Heart left ventricle (tissue), 16 donors: ENCODE measurements at regions of chr15 and their contacts with region 1.

Region 1: GRCh38 chr15:39358441-39359041 is 222.3 kb upstream of the THBS1 start:
- DNase-seq: peak in 4 of 5 donors; percentile 31 to 49 (median 44)
- ATAC-seq: peak; percentile 80 to 94 (median 90)
- H3K4me3 ChIP-seq: no peak overlapping the region
- H3K27ac ChIP-seq: peak overlapping the region; percentile 22 to 90 (median 74)
- H3K4me1 ChIP-seq: peaks cover 0 to 36% (median 14%) of the 10 kb centered on the region in 12 donors
- H3K27me3 ChIP-seq: no peaks in the 10 kb centered on the region
- CTCF ChIP-seq: no peak
- POLR2A ChIP-seq: no peak

Region 2: GRCh38 chr15:39404767-39405181 is 46.2 kb after region 1 on chr15:
- intact Hi-C with region 1: no loop called
- DNase-seq: peak in 1 of 5 donors; percentile 39
- ATAC-seq: peak; percentile 57 to 91 (median 84)
- H3K4me3 ChIP-seq: no peak overlapping the region
- H3K27ac ChIP-seq: peak overlapping the region in 2 of 12 donors; percentile 9 to 50
- H3K4me1 ChIP-seq: peaks cover 0 to 22% (median 8%) of the 10 kb centered on the region in 12 donors
- H3K27me3 ChIP-seq: no peaks in the 10 kb centered on the region
- CTCF ChIP-seq: no peak
- POLR2A ChIP-seq: no peak

Region 3: GRCh38 chr15:39419651-39420050 is 61.1 kb after region 1 on chr15:
- intact Hi-C with region 1: no loop called
- DNase-seq: no peak
- ATAC-seq: no peak
- H3K4me3 ChIP-seq: no peak overlapping the region
- H3K27ac ChIP-seq: no peak overlapping the region
- H3K4me1 ChIP-seq: peaks cover 0 to 8% (median 0%) of the 10 kb centered on the region in 12 donors
- H3K27me3 ChIP-seq: no peaks in the 10 kb centered on the region
- CTCF ChIP-seq: no peak
- POLR2A ChIP-seq: no peak

Region 4: GRCh38 chr15:39429898-39430357 is 71.4 kb after region 1 on chr15:
- intact Hi-C with region 1: loop called in 3 of 10 experiments (anchors 2 to 10 kb)
- DNase-seq: no peak
- ATAC-seq: no peak
- H3K4me3 ChIP-seq: no peak overlapping the region
- H3K27ac ChIP-seq: peak overlapping the region in 7 of 12 donors; percentile 27 to 70 (median 34)
- H3K4me1 ChIP-seq: peaks cover 0 to 83% (median 37%) of the 10 kb centered on the region in 12 donors
- H3K27me3 ChIP-seq: no peaks in the 10 kb centered on the region
- CTCF ChIP-seq: no peak
- POLR2A ChIP-seq: no peak

Region 5: GRCh38 chr15:39438799-39439592 is 80.5 kb after region 1 on chr15:
- intact Hi-C with region 1: loop called in 2 of 10 experiments (anchors 5 to 10 kb)
- DNase-seq: peak in 1 of 5 donors; percentile 40
- ATAC-seq: peak in 3 of 4 donors; percentile 34 to 43 (median 35)
- H3K4me3 ChIP-seq: no peak overlapping the region
- H3K27ac ChIP-seq: peak overlapping the region in 11 of 12 donors; percentile 31 to 83 (median 62)
- H3K4me1 ChIP-seq: peaks cover 2 to 41% (median 25%) of the 10 kb centered on the region in 12 donors
- H3K27me3 ChIP-seq: no peaks in the 10 kb centered on the region
- CTCF ChIP-seq: no peak
- POLR2A ChIP-seq: no peak

Region 6: DNA sequence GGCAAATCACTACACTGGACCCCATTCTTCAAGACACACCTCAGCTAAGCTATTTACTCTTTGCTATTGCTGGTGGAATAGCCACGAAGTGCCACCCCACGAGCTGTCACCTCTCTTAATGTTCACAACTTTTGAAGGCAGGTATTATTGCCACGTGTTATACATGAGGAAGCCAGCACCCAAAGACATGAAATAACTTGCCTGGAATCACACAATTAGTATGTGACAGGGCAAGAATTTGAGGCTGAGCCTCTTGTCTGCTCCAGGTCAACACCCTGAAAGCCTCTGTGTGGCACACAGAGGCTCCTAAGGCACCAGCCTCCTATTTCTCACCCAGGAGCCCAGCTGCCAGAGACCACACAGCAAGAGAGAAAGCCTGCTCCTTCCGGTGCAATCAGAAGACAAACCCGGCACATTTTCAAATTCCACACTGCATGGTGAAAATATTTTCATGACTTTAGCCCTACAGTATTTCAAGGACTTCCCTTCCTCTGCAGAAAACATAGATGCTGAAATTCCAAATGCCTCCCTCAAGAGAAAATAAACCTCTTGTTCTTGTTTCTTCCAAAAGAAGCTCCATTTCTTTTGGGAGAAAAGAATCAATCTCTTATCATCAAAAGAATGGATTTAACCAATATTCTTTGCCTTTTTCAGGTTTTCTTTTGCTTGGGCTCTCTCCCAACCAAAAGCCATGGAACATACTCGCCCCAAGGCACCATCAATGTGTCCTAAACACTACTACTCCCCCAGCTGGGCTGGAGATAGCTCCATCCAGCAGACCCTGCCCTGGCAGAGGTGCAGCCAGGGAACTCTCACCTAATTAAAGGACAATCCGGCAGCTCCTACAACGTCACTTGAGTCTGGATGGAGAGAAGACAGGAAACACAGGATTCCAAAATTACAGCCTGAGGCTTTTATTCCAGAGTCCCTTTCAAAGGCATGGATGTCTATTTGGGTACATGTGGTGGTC is 137.6 kb after region 1 on chr15:
- intact Hi-C with region 1: loop called in 1 of 10 experiments (anchors 10 kb)
- DNase-seq: no peak
- ATAC-seq: no peak
- H3K4me3 ChIP-seq: no peak overlapping the region
- H3K27ac ChIP-seq: peak overlapping the region in 4 of 12 donors; percentile 10 to 45 (median 36)
- H3K4me1 ChIP-seq: peaks cover 0 to 57% (median 23%) of the 10 kb centered on the region in 12 donors
- H3K27me3 ChIP-seq: no peaks in the 10 kb centered on the region
- CTCF ChIP-seq: no peak
- POLR2A ChIP-seq: no peak

Region 7: DNA sequence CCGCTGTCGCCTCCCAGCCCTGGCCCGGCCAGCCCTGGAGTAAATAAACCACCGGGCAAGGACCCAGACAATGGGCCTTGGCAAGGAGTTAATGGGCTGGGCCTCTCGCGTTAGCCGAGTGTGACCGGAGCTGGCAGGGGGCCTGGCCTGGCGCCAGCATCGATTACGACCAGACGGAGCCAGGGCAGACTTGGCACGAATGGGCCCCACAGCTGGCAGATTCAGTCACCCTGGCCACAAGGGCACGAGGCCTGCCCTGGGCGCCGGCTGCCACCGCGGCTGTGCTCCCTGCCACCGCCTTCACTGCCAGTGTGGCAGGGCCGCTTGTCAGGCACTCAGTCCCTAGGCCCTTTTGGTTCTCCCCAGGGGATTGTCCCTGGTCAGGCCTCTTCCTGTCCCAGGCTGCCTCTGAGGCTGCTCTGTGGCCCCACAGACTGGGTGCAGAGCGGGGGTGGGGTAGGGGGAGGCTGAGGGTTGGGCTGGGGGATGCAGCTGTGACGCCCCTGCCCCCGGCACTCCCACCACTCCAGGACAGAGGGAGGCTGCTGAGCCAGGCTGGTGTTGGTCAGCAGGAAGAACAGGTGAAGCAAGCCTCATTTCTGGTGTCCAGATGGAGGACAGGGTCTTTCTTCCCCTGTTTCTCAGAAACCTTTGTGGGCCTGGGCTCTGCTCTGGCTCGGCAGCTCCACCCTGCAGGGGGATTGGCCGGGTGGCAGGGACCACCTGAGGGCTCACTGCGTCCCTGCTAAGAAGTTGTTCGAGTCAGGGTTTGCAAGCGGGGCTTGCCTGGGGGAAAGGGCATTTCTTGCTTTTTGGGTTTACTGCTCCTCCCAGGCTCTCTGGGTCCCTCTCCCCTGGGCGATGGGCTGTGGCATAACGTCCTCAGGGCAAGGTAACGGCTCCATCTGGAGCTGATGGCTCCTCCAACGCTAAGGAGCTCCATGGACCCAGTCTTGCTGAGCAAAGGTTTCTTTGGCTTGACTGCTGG is 710.9 kb after region 1 on chr15:
- intact Hi-C with region 1: no loop called
- DNase-seq: peak; percentile 92 to 97 (median 93)
- ATAC-seq: peak; percentile 93 to 97 (median 95)
- H3K4me3 ChIP-seq: no peak overlapping the region
- H3K27ac ChIP-seq: peak overlapping the region in 11 of 12 donors; percentile 37 to 87 (median 69)
- H3K4me1 ChIP-seq: peaks cover 0 to 36% (median 22%) of the 10 kb centered on the region in 12 donors
- H3K27me3 ChIP-seq: no peaks in the 10 kb centered on the region
- CTCF ChIP-seq: no peak
- POLR2A ChIP-seq: no peak